IMR-90 (cell line): ENCODE measurements at regions of chr6 and their contacts with region 1.

Region 1: DNA sequence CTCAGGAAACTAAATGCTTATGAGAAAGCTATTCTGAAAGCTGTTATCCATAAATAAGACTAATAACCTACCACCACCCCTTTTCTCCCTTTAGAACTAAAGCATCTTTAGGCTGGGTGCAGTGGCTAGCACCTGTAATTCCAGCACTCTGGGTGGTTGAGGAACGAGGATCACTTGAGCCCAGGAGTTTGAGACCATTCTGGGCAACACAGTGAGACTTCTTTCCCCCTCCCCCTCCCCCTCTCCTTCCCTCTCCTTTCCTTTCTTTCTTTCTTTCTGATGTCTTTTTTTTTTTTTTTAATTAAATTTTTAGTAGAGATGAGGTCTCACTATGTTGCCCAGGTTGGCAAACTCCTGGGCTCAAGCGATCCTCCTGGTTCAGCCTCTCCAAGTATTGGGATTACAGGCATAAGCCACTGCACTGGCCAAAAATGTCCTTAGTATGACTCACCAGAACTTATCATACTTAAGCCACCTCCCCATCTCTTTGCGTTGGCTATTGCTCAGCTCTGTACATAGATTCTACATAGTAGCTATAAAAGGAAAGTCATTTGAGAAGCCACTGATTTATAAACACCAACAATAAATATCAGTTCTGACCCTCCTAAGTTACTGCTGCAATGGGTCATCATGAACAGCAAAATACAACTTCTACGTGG is 54.8 kb upstream of the SPDEF start:
- DNase-seq: peak; percentile 95
- ATAC-seq: peak; percentile 81
- H3K4me3 ChIP-seq: no peak overlapping the region
- H3K27ac ChIP-seq: no peak overlapping the region
- H3K4me1 ChIP-seq: peaks cover 2% of the 10 kb centered on the region; the same call in 1 of the 2 replicates
- H3K27me3 ChIP-seq: no peaks in the 10 kb centered on the region
- CTCF ChIP-seq: no peak
- POLR2A ChIP-seq: no peak
- RAD21 ChIP-seq: no peak

Region 2: DNA sequence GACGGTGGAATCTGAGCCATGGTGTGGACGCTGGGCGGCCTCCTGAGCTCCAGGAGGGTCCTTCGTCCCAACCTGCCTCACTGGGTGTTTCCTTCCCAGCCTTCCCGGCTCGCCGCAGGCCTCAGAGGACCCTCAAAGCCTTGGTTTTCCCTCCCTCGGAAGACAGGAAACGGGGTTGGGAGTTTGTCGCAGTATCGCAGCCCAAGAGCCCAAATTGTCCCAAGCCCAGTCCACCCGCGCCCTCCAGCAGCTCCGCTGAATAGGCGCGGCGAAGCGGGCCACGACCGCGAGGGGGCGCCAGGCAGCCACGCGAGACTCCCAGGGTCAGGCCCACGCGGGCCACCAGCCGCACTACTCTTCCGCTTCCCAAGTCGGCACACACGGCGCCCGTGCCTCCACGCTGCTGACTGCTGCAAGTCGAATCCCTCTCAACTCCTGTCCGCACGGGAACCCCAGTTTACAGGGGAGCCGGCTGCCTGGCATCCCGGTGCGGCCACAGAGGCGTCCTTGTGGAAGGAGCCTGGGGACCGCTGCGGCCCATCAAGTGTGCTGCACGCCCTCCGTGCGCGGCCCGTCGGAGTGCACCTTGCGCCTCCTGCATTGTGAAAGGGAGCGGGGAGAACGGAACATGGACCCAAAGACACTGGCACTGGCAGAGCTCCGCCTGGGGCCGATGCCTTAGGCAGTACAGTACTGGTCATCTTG is 414.7 kb before region 1 on chr6:
- CTCF ChIA-PET with region 1: interaction called, 4 read pairs
- POLR2A ChIA-PET with region 1: no interaction called
- dilution Hi-C with region 1: no loop called
- in situ Hi-C with region 1: loop called (anchors 10 kb)
- intact Hi-C with region 1: loop called (anchors 1 kb)
- DNase-seq: peak; percentile 62
- ATAC-seq: peak; percentile 98
- H3K4me3 ChIP-seq: peak overlapping the region; percentile 39
- H3K27ac ChIP-seq: no peak overlapping the region; the same call in 1 of the 2 replicates
- H3K4me1 ChIP-seq: peaks cover 5% of the 10 kb centered on the region
- H3K27me3 ChIP-seq: no peaks in the 10 kb centered on the region
- CTCF ChIP-seq: peak; percentile 92
- POLR2A ChIP-seq: 0 out of 2 replicates have a peak, but pooled peaks have one; percentile 34
- RAD21 ChIP-seq: peak; percentile 95

Region 3: GRCh38 chr6:34392497-34393190 is 218.3 kb before region 1 on chr6 and contains the start of gene NUDT3:
- CTCF ChIA-PET with region 1: no interaction called
- POLR2A ChIA-PET with region 1: no interaction called
- dilution Hi-C with region 1: no loop called
- in situ Hi-C with region 1: no loop called
- intact Hi-C with region 1: loop called (anchors 2 kb)
- DNase-seq: peak; percentile 93
- ATAC-seq: peak; percentile 92
- H3K4me3 ChIP-seq: peak within 1 kb of the TSS; percentile 93
- H3K27ac ChIP-seq: peak within 1 kb of the TSS; percentile 94
- H3K4me1 ChIP-seq: no peaks in the 10 kb centered on the region
- H3K27me3 ChIP-seq: no peaks in the 10 kb centered on the region
- CTCF ChIP-seq: peak; percentile 86
- POLR2A ChIP-seq: no peak
- RAD21 ChIP-seq: peak; percentile 80
- total RNA-seq, gene NUDT3: 17.2 and 21.4 TPM in 2 replicates

Region 4: GRCh38 chr6:34459899-34460593 is 150.9 kb before region 1 on chr6:
- CTCF ChIA-PET with region 1: interaction called, 8 read pairs
- POLR2A ChIA-PET with region 1: no interaction called
- dilution Hi-C with region 1: no loop called
- in situ Hi-C with region 1: no loop called
- intact Hi-C with region 1: loop called (anchors 1 kb)
- DNase-seq: peak; percentile 48
- ATAC-seq: peak; percentile 70
- H3K4me3 ChIP-seq: no peak overlapping the region
- H3K27ac ChIP-seq: no peak overlapping the region
- H3K4me1 ChIP-seq: peaks cover 2% of the 10 kb centered on the region; the same call in 1 of the 2 replicates
- H3K27me3 ChIP-seq: peaks cover 17% of the 10 kb centered on the region
- CTCF ChIP-seq: peak; percentile 70
- POLR2A ChIP-seq: no peak
- RAD21 ChIP-seq: peak; percentile 86

Region 5: GRCh38 chr6:34696739-34697543 is 86.0 kb after region 1 on chr6 and contains the start of gene ILRUN:
- CTCF ChIA-PET with region 1: no interaction called
- POLR2A ChIA-PET with region 1: no interaction called
- dilution Hi-C with region 1: no loop called
- in situ Hi-C with region 1: no loop called
- intact Hi-C with region 1: loop called (anchors 5 kb)
- DNase-seq: peak; percentile 92
- ATAC-seq: peak; percentile 97
- H3K4me3 ChIP-seq: peak within 1 kb of the TSS; percentile 89
- H3K27ac ChIP-seq: peak within 1 kb of the TSS; percentile 95
- H3K4me1 ChIP-seq: peaks cover 4% of the 10 kb centered on the region; the same call in 1 of the 2 replicates
- H3K27me3 ChIP-seq: no peaks in the 10 kb centered on the region
- CTCF ChIP-seq: no peak
- POLR2A ChIP-seq: no peak
- RAD21 ChIP-seq: no peak
- total RNA-seq, gene ILRUN: 29.9 and 32.2 TPM in 2 replicates

Region 6: GRCh38 chr6:34742094-34742493 is 131.1 kb after region 1 on chr6:
- CTCF ChIA-PET with region 1: no interaction called
- POLR2A ChIA-PET with region 1: no interaction called
- dilution Hi-C with region 1: no loop called
- in situ Hi-C with region 1: no loop called
- intact Hi-C with region 1: no loop called
- DNase-seq: peak; percentile 9
- ATAC-seq: no peak
- H3K4me3 ChIP-seq: no peak overlapping the region
- H3K27ac ChIP-seq: no peak overlapping the region
- H3K4me1 ChIP-seq: no peaks in the 10 kb centered on the region
- H3K27me3 ChIP-seq: peaks cover 3% of the 10 kb centered on the region
- CTCF ChIP-seq: no peak
- POLR2A ChIP-seq: no peak
- RAD21 ChIP-seq: no peak